Activated CD4-positive, alpha-beta T cell treated with anti-CD3 and anti-CD28 coated beads, Interleukin-2, amount 10 ng/mL, durations not matched to agents 24 days and 14 days (primary cell): ENCODE measurements at regions of chr7 and their contacts with region 1.

Region 1: GRCh38 chr7:39948956-39949928 is 814 bp upstream of the CDK13 start:
- DNase-seq: peak; percentile 99
- H3K4me3 Mint-ChIP-seq: peak overlapping the region; percentile 96
- H3K27ac Mint-ChIP-seq: peak overlapping the region; percentile 99
- H3K4me1 Mint-ChIP-seq: peaks cover 33% of the 10 kb centered on the region
- H3K27me3 Mint-ChIP-seq: peaks cover 2% of the 10 kb centered on the region

Region 2: DNA sequence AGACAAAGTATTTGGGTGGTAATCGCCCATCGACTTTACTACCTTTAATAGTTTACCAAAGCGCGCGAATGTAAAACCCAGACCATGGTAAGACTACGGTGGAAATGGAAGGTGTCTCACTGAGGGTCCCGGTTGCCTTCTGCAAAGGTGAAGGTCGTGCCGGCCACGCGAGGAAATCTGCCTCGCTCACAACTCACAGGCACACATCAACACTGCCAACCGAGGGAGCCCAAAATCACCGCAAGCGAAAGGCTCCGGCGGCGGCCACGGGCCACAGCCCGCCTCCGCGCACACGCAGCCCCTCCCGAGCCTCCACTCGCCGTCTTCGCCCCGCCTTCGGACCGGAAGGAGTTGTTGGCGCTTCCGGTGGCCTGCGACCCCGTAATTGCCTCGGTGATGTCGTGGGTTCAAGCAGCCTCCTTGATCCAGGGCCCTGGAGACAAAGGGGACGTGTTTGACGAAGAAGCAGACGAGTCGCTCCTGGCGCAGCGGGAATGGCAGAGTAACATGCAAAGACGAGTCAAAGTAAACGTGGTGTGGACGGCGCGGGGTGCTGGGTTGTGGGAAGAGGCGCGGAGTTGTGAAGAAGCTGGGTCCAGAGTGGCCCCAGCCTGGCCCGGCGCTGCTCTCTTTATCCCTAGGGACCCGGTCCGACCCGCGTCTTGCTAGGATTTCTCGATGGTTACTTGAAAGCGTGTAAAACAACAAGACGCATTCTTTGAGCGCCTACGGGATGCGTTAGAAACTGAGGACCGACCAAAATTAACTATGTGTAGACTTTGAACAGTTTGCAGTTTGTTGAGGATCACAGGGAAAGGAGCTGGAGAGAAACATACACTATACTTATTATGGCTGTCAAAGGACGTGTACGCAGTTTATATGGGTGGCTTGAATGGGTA is 383.0 kb before region 1 on chr7 and contains the start of gene YAE1:
- intact Hi-C with region 1: loop called (anchors 2 kb)
- DNase-seq: peak; percentile 94
- H3K4me3 Mint-ChIP-seq: peak within 1 kb of the TSS; percentile 99
- H3K27ac Mint-ChIP-seq: peak within 1 kb of the TSS; percentile 97
- H3K4me1 Mint-ChIP-seq: peaks cover 19% of the 10 kb centered on the region
- H3K27me3 Mint-ChIP-seq: peaks cover 7% of the 10 kb centered on the region
- total RNA-seq, gene YAE1: 14.2 and 14.3 TPM in 2 replicates

Region 3: GRCh38 chr7:39623018-39623731 is 326.1 kb before region 1 on chr7 and contains the start of gene RALA:
- intact Hi-C with region 1: loop called (anchors 1 kb)
- DNase-seq: peak; percentile 97
- H3K4me3 Mint-ChIP-seq: peak within 1 kb of the TSS; percentile 99
- H3K27ac Mint-ChIP-seq: peak within 1 kb of the TSS; percentile 95
- H3K4me1 Mint-ChIP-seq: peaks cover 35% of the 10 kb centered on the region
- H3K27me3 Mint-ChIP-seq: peaks cover 2% of the 10 kb centered on the region
- total RNA-seq, gene RALA: 35.5 and 37.0 TPM in 2 replicates

Region 4: GRCh38 chr7:39896840-39897239 is 52.4 kb before region 1 on chr7:
- intact Hi-C with region 1: loop called (anchors 2 kb)
- DNase-seq: no peak
- H3K4me3 Mint-ChIP-seq: no peak overlapping the region
- H3K27ac Mint-ChIP-seq: no peak overlapping the region
- H3K4me1 Mint-ChIP-seq: peaks cover 2% of the 10 kb centered on the region
- H3K27me3 Mint-ChIP-seq: peaks cover 32% of the 10 kb centered on the region

Region 5: DNA sequence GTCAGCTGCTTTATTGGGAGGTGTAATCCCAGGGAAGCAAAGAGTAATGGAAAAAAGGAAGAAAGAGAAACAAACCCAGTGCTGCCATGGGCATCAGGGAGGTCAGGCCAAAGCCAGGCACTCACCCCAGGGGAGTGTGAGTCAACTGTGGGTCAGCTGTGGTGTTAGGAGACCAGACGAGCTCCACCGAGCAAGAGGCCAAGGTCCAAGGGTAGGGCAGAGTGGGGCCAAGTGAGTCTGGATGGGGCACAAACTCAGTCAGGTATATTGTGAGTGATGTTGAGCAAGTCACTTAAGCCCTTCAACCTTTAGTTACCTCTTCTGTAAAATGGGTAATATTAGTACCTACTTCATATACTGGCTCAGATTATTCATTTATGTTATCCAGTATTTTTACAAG is 29.6 kb before region 1 on chr7:
- intact Hi-C with region 1: no loop called
- DNase-seq: no peak
- H3K4me3 Mint-ChIP-seq: no peak overlapping the region
- H3K27ac Mint-ChIP-seq: no peak overlapping the region
- H3K4me1 Mint-ChIP-seq: peaks cover 9% of the 10 kb centered on the region
- H3K27me3 Mint-ChIP-seq: peaks cover 17% of the 10 kb centered on the region

Region 6: DNA sequence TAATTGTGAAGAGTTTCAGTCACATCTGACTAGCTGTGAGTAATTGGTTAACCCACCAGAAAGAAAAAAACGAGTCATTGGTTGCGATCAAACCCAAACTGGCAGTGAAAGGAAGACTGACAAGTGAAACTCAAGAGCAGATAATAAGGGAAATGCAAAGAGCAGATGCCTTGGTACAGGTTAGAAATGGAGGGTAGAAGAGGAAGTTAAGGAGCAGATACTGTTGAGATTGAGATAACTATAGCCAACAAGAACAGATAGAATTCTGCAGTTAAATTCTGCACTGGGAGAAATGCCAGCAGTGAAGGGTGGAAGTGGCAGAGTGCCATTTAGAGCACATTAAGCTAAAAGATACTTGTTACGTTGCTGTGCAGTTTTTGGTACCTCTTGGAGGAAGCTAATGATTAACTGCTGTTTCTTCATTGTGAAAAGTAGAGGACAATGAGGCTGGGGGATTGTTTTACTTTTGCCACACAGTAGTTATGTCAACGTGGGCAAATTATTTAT is 66.6 kb after region 1 on chr7:
- intact Hi-C with region 1: loop called (anchors 5 kb)
- DNase-seq: no peak
- H3K4me3 Mint-ChIP-seq: no peak overlapping the region
- H3K27ac Mint-ChIP-seq: peak overlapping the region; percentile 26
- H3K4me1 Mint-ChIP-seq: peaks cover 15% of the 10 kb centered on the region
- H3K27me3 Mint-ChIP-seq: no peaks in the 10 kb centered on the region

Region 7: GRCh38 chr7:40134428-40135316 is 185.4 kb after region 1 on chr7 and contains the starts of genes MPLKIP and SUGCT:
- intact Hi-C with region 1: loop called (anchors 1 kb)
- DNase-seq: peak; percentile 96
- H3K4me3 Mint-ChIP-seq: peak within 1 kb of the TSS; percentile 95
- H3K27ac Mint-ChIP-seq: peak within 1 kb of the TSS; percentile 94
- H3K4me1 Mint-ChIP-seq: peaks cover 11% of the 10 kb centered on the region
- H3K27me3 Mint-ChIP-seq: peaks cover 11% of the 10 kb centered on the region
- total RNA-seq, gene MPLKIP: 37.3 and 40.8 TPM in 2 replicates
- total RNA-seq, gene SUGCT: 0.91 and 1.0 TPM in 2 replicates

Region 8: GRCh38 chr7:41097501-41097900 is 1148.3 kb after region 1 on chr7:
- intact Hi-C with region 1: no loop called
- DNase-seq: no peak
- H3K4me3 Mint-ChIP-seq: no peak overlapping the region
- H3K27ac Mint-ChIP-seq: no peak overlapping the region
- H3K4me1 Mint-ChIP-seq: no peaks in the 10 kb centered on the region
- H3K27me3 Mint-ChIP-seq: no peaks in the 10 kb centered on the region